Astrocyte of the cerebellum (primary cell): ENCODE measurements at regions of chr1 and their contacts with region 1.

Region 1: GRCh38 chr1:84753516-84754385 is 63.5 kb upstream of the SSX2IP start:
- DNase-seq: peak; percentile 53
- H3K4me3 ChIP-seq: no peak overlapping the region
- CTCF ChIP-seq: peak; percentile 98

Region 2: DNA sequence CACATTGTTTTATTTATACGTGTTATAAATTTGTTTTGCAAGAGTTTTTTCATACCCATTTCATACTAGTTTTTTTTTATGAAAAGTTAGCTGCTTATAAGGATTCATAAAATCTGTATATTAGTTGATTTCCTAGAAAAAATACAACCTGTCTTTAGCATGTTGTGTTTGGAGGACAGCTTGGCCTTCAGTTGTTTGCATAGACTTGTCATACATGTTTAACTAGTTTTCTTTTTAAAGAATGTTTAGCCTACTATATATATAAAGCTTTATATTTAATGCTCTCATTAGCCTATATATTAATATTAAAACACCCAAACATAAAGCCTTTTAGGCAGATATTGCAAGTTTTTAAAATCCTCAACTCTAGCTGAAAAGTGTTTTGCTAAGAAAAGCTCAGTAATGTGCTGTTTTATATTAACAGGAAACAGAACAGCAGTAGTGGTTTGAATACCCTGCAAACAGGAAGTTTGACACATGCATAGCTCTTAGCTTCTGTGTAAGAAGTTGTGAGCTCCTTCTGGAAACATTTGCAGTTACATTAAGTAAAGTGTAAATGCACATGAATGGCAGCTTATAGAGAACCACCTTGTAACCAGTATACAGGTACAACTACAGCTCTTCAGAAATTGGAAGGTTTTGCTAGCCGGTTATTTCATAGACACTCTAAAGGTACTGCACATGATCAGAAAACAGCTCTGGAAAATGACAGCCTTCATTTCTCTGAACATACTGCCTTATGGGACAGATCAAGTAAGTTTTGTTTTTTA is 609.8 kb before region 1 on chr1 and contains the start of gene PRKACB:
- in situ Hi-C with region 1: loop called (anchors 25 kb)
- DNase-seq: no peak
- H3K4me3 ChIP-seq: no peak within 1 kb of the TSS
- CTCF ChIP-seq: no peak

Region 3: DNA sequence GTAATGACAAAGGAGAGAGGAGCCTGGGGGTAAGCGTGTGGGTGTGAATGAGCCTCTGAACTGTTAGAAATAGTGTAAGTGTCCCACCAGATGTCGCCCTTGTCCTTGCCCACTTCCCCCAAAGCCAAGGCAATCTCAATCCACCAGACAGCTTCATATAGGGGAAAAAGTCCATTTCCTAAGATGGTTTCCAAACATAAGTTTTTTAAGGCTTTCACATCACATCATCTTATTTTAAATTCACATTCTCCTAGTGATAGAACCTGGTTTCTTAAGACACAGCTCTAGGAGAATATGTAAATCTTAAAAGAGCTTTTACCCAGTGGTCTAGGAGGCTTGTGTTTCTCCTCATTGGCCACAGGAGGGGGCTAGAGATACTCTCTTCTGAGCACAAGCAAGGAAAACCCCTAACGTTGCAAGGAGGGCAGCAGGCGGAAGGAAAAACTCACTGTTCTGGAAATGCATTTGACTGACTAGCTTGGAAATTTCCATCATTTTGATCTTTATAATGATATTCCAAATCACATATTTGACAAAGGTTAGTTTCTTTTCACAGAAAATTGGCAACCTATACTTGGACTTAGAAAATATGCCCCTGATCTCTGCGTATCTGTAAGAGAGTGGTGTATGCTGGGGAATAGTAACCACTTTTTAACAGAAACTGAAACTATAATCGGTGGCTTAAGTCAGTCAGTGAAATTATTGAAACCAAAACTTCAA is 191.2 kb after region 1 on chr1:
- in situ Hi-C with region 1: no loop called
- DNase-seq: peak; percentile 89
- H3K4me3 ChIP-seq: peak overlapping the region; percentile 21
- CTCF ChIP-seq: peak; percentile 81